Transverse colon (tissue), 4 donors: ENCODE measurements at regions of chr2 and their contacts with region 1.

Region 1: GRCh38 chr2:41326851-41327250 is 721.0 kb upstream of the PKDCC start:
- DNase-seq: no peak
- H3K4me3 ChIP-seq: no peak overlapping the region
- H3K27ac ChIP-seq: no peak overlapping the region
- H3K4me1 ChIP-seq: no peaks in the 10 kb centered on the region
- H3K27me3 ChIP-seq: no peaks in the 10 kb centered on the region
- CTCF ChIP-seq: no peak
- EP300 ChIP-seq: no peak
- POLR2A ChIP-seq: no peak

Region 2: DNA sequence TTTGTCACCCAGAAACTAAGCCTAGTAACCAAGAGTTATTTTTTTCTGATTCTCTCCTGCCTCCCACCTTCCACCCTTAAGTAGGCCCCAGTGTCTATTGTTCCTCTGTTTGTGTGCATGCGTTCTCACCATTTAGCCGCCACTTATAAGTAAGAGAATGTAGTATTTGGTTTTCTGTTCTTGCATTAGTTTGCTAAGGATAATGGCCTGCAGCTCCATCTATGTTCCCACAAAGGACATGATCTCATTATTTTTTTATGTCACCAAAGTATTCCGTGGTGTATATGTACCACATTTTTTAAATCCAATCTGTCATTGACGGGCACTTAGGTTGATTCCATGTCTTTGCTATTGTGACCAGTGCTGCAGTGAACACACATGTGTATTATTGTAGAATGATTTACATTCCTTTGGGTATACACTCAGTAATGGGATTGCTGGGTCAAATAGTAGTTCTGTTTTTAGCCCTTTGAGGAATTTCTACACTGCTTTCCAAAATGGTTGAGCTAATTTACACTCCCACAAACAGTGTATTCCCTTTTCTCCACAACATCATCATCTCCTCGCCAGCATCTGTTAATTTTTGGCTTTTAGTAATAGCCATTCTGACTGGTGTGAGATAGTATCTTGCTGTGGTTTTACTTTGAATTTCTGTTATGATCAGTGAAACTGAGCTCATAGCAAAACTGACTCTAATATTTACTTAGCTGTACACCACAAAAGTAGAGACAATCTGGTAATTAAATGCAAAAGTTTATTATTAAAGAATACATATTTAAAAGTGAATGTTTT is 214.8 kb before region 1 on chr2:
- in situ Hi-C with region 1: no loop called
- intact Hi-C with region 1: no loop called
- DNase-seq: no peak
- H3K4me3 ChIP-seq: no peak overlapping the region
- H3K27ac ChIP-seq: no peak overlapping the region
- H3K4me1 ChIP-seq: no peaks in the 10 kb centered on the region
- H3K27me3 ChIP-seq: no peaks in the 10 kb centered on the region
- CTCF ChIP-seq: no peak
- EP300 ChIP-seq: no peak
- POLR2A ChIP-seq: no peak

Region 3: DNA sequence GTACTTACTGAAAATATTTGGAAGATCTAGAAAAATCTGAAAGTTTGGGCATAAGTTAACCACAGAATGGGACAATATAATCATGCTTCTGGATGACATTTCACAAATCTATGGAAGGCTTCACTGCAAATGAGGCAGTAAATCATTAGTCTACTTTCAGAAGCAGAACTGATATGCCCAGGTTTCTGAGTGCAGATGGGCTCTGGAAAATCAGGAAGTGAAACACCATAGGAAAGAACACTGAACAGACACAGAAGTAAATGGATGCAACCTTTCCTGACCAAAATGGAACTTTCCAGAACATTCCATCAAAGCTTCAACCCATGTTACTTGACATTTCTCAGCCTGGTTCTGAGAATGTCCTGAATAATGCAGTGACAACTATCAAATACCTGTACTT is 1111.8 kb after region 1 on chr2:
- in situ Hi-C with region 1: no loop called
- intact Hi-C with region 1: loop called (anchors 5 kb)
- DNase-seq: no peak
- H3K4me3 ChIP-seq: no peak overlapping the region
- H3K27ac ChIP-seq: no peak overlapping the region
- H3K4me1 ChIP-seq: peaks cover 0 to 6% (median 2%) of the 10 kb centered on the region in 4 donors
- H3K27me3 ChIP-seq: no peaks in the 10 kb centered on the region
- CTCF ChIP-seq: no peak
- EP300 ChIP-seq: no peak
- POLR2A ChIP-seq: no peak